ENCODE measurements at regions of chr20 and their contacts with region 1.

Region 1: GRCh38 chr20:17569616-17570346 is at the start of gene DSTN:
- DNase-seq: peak; percentile 75 to 95 (median 82)
- ATAC-seq: peak; percentile 87
- H3K4me3 ChIP-seq: peak within 1 kb of the TSS; percentile 85
- H3K4me3 Mint-ChIP-seq: peak within 1 kb of the TSS; percentile 96
- H3K27ac ChIP-seq: peak within 1 kb of the TSS; percentile 53 to 55
- H3K27ac Mint-ChIP-seq: peak within 1 kb of the TSS; percentile 72
- H3K4me1 ChIP-seq: peaks cover 17% of the 10 kb centered on the region
- H3K4me1 Mint-ChIP-seq: peaks cover 34% of the 10 kb centered on the region
- H3K27me3 ChIP-seq: no peaks in the 10 kb centered on the region
- H3K27me3 Mint-ChIP-seq: no peaks in the 10 kb centered on the region
- CTCF ChIP-seq: no peak
- total RNA-seq, gene DSTN: 36.0 to 38.9 TPM

Region 2: GRCh38 chr20:17327185-17328148 is 242.3 kb before region 1 on chr20:
- CTCF ChIA-PET with region 1: no interaction called
- POLR2A ChIA-PET with region 1: no interaction called
- intact Hi-C with region 1: no loop called
- DNase-seq: no peak
- ATAC-seq: no peak
- H3K4me3 ChIP-seq: no peak overlapping the region
- H3K4me3 Mint-ChIP-seq: no peak overlapping the region
- H3K27ac ChIP-seq: no peak overlapping the region
- H3K27ac Mint-ChIP-seq: no peak overlapping the region
- H3K4me1 ChIP-seq: no peaks in the 10 kb centered on the region
- H3K4me1 Mint-ChIP-seq: no peaks in the 10 kb centered on the region
- H3K27me3 ChIP-seq: peaks cover 12 to 13% of the 10 kb centered on the region in 2 experiments
- H3K27me3 Mint-ChIP-seq: peaks cover 45% of the 10 kb centered on the region
- CTCF ChIP-seq: no peak

Region 3: GRCh38 chr20:17611540-17612286 is 41.9 kb after region 1 on chr20:
- CTCF ChIA-PET with region 1: no interaction called
- POLR2A ChIA-PET with region 1: interaction called, 42 read pairs
- intact Hi-C with region 1: loop called (anchors 1 to 2 kb)
- DNase-seq: peak in 2 of 14 experiments; percentile 34 to 41
- ATAC-seq: no peak
- H3K4me3 ChIP-seq: peak overlapping the region; percentile 38
- H3K4me3 Mint-ChIP-seq: peak overlapping the region; percentile 25
- H3K27ac ChIP-seq: peak overlapping the region; percentile 68 to 83
- H3K27ac Mint-ChIP-seq: peak overlapping the region; percentile 88
- H3K4me1 ChIP-seq: peaks cover 44% of the 10 kb centered on the region
- H3K4me1 Mint-ChIP-seq: peaks cover 44% of the 10 kb centered on the region
- H3K27me3 ChIP-seq: no peaks in the 10 kb centered on the region
- H3K27me3 Mint-ChIP-seq: no peaks in the 10 kb centered on the region
- CTCF ChIP-seq: peak; percentile 35

Region 4: GRCh38 chr20:17648791-17649730 is 79.3 kb after region 1 on chr20:
- CTCF ChIA-PET with region 1: no interaction called
- POLR2A ChIA-PET with region 1: no interaction called
- intact Hi-C with region 1: no loop called
- DNase-seq: peak in 12 of 14 experiments; percentile 9 to 60 (median 25)
- ATAC-seq: peak; percentile 48
- H3K4me3 ChIP-seq: no peak overlapping the region
- H3K4me3 Mint-ChIP-seq: no peak overlapping the region
- H3K27ac ChIP-seq: no peak overlapping the region
- H3K27ac Mint-ChIP-seq: no peak overlapping the region
- H3K4me1 ChIP-seq: peaks cover 16% of the 10 kb centered on the region
- H3K4me1 Mint-ChIP-seq: no peaks in the 10 kb centered on the region
- H3K27me3 ChIP-seq: no peaks in the 10 kb centered on the region
- H3K27me3 Mint-ChIP-seq: no peaks in the 10 kb centered on the region
- CTCF ChIP-seq: peak; percentile 42

Measured in CD4-positive, alpha-beta T cell (primary cell).